SK-N-SH (cell line): ENCODE measurements at regions of chr15 and their contacts with region 1.

Region 1: GRCh38 chr15:57654153-57654852 is 52.2 kb upstream of the POLR2M start:
- DNase-seq: no peak
- H3K4me3 ChIP-seq: no peak overlapping the region
- H3K27ac ChIP-seq: no peak overlapping the region
- H3K4me1 ChIP-seq: no peaks in the 10 kb centered on the region
- H3K27me3 ChIP-seq: no peaks in the 10 kb centered on the region
- CTCF ChIP-seq: no peak
- EP300 ChIP-seq: no peak
- RAD21 ChIP-seq: no peak

Region 2: GRCh38 chr15:57640935-57641682 is 13.2 kb before region 1 on chr15:
- CTCF ChIA-PET with region 1: interaction called, 12 read pairs
- POLR2A ChIA-PET with region 1: no interaction called
- DNase-seq: peak; percentile 49
- H3K4me3 ChIP-seq: no peak overlapping the region
- H3K27ac ChIP-seq: no peak overlapping the region
- H3K4me1 ChIP-seq: no peaks in the 10 kb centered on the region
- H3K27me3 ChIP-seq: no peaks in the 10 kb centered on the region; the same call in 1 of the 2 replicates
- CTCF ChIP-seq: peak; percentile 59
- EP300 ChIP-seq: no peak
- RAD21 ChIP-seq: peak; percentile 63